ENCODE measurements at regions of chr16 and their contacts with region 1.

Region 1: GRCh38 chr16:17277977-17278381 is 192.8 kb downstream of the XYLT1 start:
- DNase-seq: no peak
- ATAC-seq: no peak
- H3K4me3 ChIP-seq: no peak overlapping the region
- H3K27ac ChIP-seq: no peak overlapping the region
- H3K4me1 ChIP-seq: no peaks in the 10 kb centered on the region
- H3K27me3 ChIP-seq: peaks cover 20% of the 10 kb centered on the region; the same call in 1 of the 2 replicates
- CTCF ChIP-seq: peak; percentile 67

Region 2: DNA sequence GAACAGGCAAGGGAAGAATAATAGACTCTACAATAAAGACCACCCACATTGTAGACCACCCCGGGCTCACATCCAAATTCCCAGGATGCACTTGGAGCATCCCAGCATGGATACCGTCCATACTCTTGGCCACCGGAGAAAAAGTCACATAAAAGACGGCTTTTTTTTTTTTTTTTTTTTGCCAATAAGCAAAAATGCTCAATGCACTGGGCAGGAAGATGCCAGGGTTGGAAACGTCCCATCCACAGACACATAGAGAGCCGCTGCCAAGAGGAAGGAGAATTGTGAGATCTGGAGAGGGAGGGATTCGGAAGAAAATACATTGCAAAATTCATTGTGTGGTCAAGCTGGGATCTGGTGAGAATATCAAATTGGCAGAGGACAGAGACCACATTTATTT is 94.0 kb before region 1 on chr16:
- CTCF ChIA-PET with region 1: no interaction called
- POLR2A ChIA-PET with region 1: no interaction called
- in situ Hi-C with region 1: no loop called
- intact Hi-C with region 1: no loop called
- DNase-seq: no peak
- ATAC-seq: no peak
- H3K4me3 ChIP-seq: no peak overlapping the region
- H3K27ac ChIP-seq: no peak overlapping the region
- H3K4me1 ChIP-seq: no peaks in the 10 kb centered on the region
- H3K27me3 ChIP-seq: peaks cover 2% of the 10 kb centered on the region; the same call in 1 of the 2 replicates
- CTCF ChIP-seq: no peak

Region 3: GRCh38 chr16:17204206-17204605 is 73.8 kb before region 1 on chr16:
- CTCF ChIA-PET with region 1: no interaction called
- POLR2A ChIA-PET with region 1: interaction called, 12 read pairs
- in situ Hi-C with region 1: no loop called
- intact Hi-C with region 1: no loop called
- DNase-seq: no peak
- ATAC-seq: no peak
- H3K4me3 ChIP-seq: no peak overlapping the region
- H3K27ac ChIP-seq: no peak overlapping the region
- H3K4me1 ChIP-seq: no peaks in the 10 kb centered on the region
- H3K27me3 ChIP-seq: peaks cover 3% of the 10 kb centered on the region; the same call in 1 of the 2 replicates
- CTCF ChIP-seq: no peak

Region 4: DNA sequence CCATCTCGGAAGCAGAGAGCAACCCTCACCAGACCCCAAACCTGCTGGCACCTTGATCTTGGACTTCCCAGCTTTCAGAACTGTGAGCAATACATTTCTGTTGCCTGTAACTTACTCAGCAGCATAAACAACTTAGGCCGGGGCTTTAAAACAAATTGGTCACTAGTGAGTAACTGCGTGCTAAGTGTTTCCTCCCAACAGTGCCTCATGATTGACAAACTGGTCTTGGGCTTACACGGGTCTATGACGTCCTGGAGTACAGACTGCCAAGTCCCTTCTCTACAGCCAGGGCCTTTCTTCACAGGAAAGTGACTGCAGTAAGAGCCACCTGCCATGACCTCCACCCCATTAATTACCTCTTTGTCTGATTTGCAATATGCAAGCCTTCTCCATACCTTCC is 56.1 kb after region 1 on chr16:
- CTCF ChIA-PET with region 1: no interaction called
- POLR2A ChIA-PET with region 1: no interaction called
- in situ Hi-C with region 1: no loop called
- intact Hi-C with region 1: loop called (anchors 10 kb)
- DNase-seq: peak; percentile 13
- ATAC-seq: no peak
- H3K4me3 ChIP-seq: no peak overlapping the region
- H3K27ac ChIP-seq: no peak overlapping the region
- H3K4me1 ChIP-seq: no peaks in the 10 kb centered on the region
- H3K27me3 ChIP-seq: peaks cover under 1% of the 10 kb centered on the region; the same call in 1 of the 2 replicates
- CTCF ChIP-seq: no peak

Measured in Panc1 (cell line).